Sigmoid colon (tissue), 7 donors: ENCODE measurements at regions of chr1 and their contacts with region 1.

Region 1: DNA sequence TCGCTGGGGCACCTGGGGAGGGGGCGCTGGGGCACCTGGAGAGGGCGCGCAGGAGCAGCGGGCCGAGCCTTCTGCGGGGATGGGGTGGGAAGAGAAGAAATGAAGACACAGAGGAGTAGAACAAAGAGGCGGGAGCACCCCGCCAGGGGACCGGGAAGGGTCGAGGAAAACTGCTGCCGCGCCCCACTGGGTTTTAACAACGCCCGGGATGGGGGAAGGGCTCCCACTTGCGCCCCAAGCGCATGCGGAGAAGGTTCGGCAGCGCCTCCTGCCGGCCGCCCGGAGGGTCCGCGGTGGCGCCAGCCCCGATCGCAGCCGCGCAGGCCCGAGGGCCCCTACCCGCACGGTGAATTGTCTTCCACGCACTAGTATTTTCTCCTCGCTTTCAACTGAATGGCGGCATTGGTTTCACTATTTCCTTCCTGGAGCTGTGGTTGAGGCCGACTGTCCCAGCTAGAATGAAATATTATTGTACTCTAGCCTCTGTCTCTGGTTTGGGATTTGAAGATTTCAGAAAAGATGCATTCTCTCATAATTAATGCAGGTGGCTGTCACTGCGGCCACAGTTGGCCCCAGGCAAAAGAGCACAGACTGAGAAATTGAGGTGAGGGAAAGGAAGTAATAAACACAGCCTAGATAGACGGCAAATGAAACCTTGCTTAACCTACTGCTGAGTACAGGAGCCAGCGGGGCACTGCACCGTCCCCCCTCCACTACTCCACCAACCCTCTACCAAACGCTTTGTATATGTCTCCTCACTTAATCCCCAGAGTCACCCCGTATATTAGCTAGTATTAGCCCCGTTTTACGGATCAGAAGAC is 57.3 kb downstream of the MAB21L3 start:
- DNase-seq: peak; percentile 90
- H3K4me3 ChIP-seq: peak overlapping the region; percentile 54 to 82 (median 68)
- H3K27ac ChIP-seq: peak overlapping the region; percentile 54 to 66 (median 60)
- H3K4me1 ChIP-seq: peaks cover 0 to 24% (median 16%) of the 10 kb centered on the region in 4 donors
- H3K27me3 ChIP-seq: no peaks in the 10 kb centered on the region
- CTCF ChIP-seq: peak; percentile 64 to 90 (median 82)
- EP300 ChIP-seq: peak in 1 of 4 donors; percentile 17
- POLR2A ChIP-seq: no peak

Region 2: DNA sequence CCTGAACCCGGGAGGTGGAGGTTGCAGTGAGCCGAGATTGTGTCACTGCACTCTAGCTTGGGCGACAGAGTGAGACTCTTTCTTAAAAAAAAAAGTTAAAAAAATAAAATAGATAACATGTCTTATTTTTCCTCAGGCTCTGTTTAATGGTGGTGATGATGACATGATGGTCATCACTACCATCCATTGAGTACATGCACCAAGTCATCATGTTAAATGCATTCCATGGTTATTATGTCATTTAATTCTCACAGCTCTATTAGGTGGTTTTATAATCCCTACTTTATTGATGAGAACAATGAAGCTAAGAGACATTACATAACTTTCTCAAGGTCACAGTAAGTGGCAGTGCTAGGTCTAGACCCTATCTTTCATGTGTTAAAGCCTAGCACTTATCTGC is 91.7 kb before region 1 on chr1:
- intact Hi-C with region 1: no loop called
- DNase-seq: no peak
- H3K4me3 ChIP-seq: no peak overlapping the region
- H3K27ac ChIP-seq: no peak overlapping the region
- H3K4me1 ChIP-seq: no peaks in the 10 kb centered on the region
- H3K27me3 ChIP-seq: no peaks in the 10 kb centered on the region
- CTCF ChIP-seq: no peak
- EP300 ChIP-seq: no peak
- POLR2A ChIP-seq: no peak

Region 3: DNA sequence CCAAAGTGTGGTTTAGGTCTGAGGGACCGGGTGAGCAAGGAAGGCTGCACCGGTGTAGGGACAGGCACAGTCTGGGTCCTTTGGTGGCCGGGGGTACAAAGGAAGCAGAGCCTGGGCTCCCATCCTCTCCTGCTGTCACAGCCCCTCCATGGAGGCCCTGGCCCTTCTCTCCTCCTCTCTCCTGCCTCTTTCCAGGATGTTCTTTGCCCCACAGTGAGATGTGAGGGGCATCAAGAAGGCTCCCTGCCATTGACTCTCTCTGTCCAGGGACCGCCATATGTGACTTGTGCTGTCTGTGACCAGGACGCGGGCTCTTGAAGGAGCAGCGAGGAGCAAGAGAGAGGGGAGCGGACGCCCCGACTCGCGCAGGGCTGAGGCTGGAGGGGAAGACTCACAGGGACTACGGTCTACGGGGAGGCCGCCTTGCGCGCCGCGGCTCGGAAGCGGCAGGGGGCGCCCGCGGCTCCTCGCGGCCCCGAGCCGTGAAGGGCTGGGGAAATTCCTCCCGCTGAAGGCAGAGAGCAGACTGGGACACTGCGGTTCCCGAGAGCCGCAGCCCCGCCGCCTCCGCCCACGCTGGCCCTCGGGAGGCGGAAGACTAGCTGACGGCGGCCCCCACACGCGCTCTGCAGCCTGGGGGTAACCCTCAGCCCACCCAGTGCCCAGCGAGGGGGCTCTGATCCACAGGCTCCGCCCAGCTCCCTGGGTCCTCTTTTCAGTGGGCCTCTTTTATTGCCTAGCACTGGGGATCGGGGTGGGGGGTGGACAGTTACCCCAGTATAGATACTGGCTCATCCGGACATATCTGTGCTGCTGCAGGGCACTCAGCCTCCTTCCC is 16.5 kb before region 1 on chr1:
- intact Hi-C with region 1: loop called (anchors 2 kb)
- DNase-seq: peak; percentile 78
- H3K4me3 ChIP-seq: peak overlapping the region; percentile 23 to 55 (median 44)
- H3K27ac ChIP-seq: peak overlapping the region; percentile 1 to 65 (median 52)
- H3K4me1 ChIP-seq: peaks cover 0 to 12% (median 10%) of the 10 kb centered on the region in 4 donors
- H3K27me3 ChIP-seq: no peaks in the 10 kb centered on the region
- CTCF ChIP-seq: peak; percentile 67 to 92 (median 77)
- EP300 ChIP-seq: no peak
- POLR2A ChIP-seq: no peak

Region 4: DNA sequence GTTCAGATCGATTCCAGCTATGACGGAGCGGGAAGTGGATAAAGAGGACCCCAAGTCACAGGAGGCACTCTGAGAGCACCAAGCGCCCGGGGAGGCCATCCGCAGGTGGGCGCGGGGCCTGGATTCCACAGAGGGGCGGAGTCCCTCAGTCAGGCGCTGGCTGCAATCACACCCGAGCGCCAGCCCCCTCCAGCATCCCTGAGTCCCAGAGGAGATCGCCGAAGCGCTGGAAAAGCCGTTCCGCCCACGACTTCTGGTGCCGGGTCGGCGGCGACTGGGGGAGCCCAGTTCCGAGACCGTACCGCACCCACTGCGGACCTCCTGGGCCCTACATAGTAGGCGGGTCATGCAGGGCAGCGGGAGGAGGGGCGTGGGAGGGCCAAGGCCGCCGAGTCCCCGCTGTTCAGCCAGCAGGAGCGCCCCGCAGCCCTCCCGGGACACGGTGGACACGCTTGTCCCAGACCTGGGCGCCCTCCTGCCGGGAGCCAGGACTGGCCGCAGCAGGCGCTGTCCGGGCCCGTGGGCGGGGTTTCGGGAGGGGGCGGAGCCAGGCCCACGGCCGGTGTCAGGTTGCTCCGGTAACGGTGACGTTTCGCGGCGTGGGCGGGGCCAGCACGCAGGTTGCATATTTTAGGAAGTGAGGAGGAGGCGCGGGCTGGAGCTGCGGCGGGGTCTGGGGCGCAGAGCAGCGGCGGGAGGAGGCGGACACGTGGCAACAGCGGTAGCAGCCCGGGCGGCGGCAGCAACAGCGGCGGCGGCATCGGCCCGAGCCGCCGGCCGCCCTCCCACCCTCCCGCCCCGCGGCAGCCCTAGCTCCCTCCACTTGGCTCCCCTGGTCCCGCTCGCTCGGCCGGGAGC is 204.3 kb after region 1 on chr1 and contains the start of gene ATP1A1:
- intact Hi-C with region 1: loop called (anchors 10 kb)
- DNase-seq: peak; percentile 98
- H3K4me3 ChIP-seq: peak within 1 kb of the TSS; percentile 63 to 99 (median 96)
- H3K27ac ChIP-seq: peak within 1 kb of the TSS; percentile 80 to 98 (median 95)
- H3K4me1 ChIP-seq: peaks cover 0 to 45% (median 39%) of the 10 kb centered on the region in 4 donors
- H3K27me3 ChIP-seq: no peaks in the 10 kb centered on the region
- CTCF ChIP-seq: peak in 1 of 4 experiments; percentile 11
- EP300 ChIP-seq: no peak
- POLR2A ChIP-seq: peak; percentile 69 to 81
- total RNA-seq, gene ATP1A1: 88.6 to 101 (median 91.8) TPM